Heart right ventricle (tissue), 16 donors: ENCODE measurements at regions of chr2 and their contacts with region 1.

Region 1: DNA sequence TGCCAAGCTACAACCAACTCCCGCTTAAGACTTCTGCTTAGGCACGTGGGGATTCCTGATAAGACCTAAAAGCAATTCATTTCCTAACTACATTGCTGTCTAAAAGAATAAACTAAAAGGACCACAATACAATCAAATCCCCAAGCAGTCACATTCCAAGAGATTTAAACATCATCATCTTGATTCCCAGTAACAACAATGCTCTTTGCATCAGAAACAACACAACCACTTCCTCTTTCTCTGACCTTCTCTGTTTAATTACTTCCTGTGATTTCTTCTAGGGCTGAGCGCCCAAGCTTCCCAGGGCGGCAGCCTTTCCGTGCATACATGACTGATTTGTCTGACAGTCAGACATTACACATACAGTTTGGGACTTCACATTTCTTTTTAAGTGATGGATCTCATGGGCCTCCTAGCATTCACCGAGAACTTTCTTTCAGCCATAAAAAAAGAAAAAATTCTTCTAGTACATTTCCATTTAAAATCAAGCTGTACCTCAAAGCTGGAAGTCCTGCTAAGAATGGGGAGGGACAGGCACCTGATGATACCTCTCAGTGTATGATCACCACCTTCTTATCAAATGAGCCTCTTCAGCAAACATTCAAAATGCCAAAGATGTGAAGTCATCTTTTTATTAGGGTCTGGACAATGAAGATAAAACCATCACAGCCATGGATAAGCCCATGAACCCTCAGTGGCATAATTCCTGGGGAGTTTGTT is 11.5 kb downstream of the SPRED2 start:
- DNase-seq: peak in 1 of 2 donors; percentile 21
- ATAC-seq: peak in 7 of 8 donors; percentile 53 to 89 (median 76)
- H3K4me3 ChIP-seq: no peak overlapping the region
- H3K27ac ChIP-seq: peak overlapping the region in 5 of 10 donors; percentile 1 to 21 (median 15)
- H3K4me1 ChIP-seq: peaks cover 5 to 73% (median 47%) of the 10 kb centered on the region in 9 donors
- H3K27me3 ChIP-seq: no peaks in the 10 kb centered on the region
- CTCF ChIP-seq: no peak

Region 2: GRCh38 chr2:65402780-65403528 is 17.9 kb before region 1 on chr2:
- intact Hi-C with region 1: loop called in 1 of 10 experiments (anchors 1 kb)
- DNase-seq: no peak
- ATAC-seq: peak in 1 of 8 donors; percentile 45
- H3K4me3 ChIP-seq: no peak overlapping the region
- H3K27ac ChIP-seq: no peak overlapping the region
- H3K4me1 ChIP-seq: peaks cover 4 to 63% (median 27%) of the 10 kb centered on the region in 9 donors
- H3K27me3 ChIP-seq: no peaks in the 10 kb centered on the region
- CTCF ChIP-seq: no peak